Left cardiac atrium (tissue), 4 donors: ENCODE measurements at regions of chr7 and their contacts with region 1.

Region 1: GRCh38 chr7:35185907-35186731 is 67.8 kb downstream of the TBX20 start:
- DNase-seq: peak; percentile 77
- ATAC-seq: peak; percentile 91 to 94

Region 2: GRCh38 chr7:35253710-35254495 is 67.8 kb after region 1 on chr7 and contains the start of gene TBX20:
- intact Hi-C with region 1: loop called in 1 of 2 experiments (anchors 10 kb)
- DNase-seq: peak; percentile 89
- ATAC-seq: peak; percentile 83 to 84
- total RNA-seq, gene TBX20: 109 to 126 TPM

Region 3: DNA sequence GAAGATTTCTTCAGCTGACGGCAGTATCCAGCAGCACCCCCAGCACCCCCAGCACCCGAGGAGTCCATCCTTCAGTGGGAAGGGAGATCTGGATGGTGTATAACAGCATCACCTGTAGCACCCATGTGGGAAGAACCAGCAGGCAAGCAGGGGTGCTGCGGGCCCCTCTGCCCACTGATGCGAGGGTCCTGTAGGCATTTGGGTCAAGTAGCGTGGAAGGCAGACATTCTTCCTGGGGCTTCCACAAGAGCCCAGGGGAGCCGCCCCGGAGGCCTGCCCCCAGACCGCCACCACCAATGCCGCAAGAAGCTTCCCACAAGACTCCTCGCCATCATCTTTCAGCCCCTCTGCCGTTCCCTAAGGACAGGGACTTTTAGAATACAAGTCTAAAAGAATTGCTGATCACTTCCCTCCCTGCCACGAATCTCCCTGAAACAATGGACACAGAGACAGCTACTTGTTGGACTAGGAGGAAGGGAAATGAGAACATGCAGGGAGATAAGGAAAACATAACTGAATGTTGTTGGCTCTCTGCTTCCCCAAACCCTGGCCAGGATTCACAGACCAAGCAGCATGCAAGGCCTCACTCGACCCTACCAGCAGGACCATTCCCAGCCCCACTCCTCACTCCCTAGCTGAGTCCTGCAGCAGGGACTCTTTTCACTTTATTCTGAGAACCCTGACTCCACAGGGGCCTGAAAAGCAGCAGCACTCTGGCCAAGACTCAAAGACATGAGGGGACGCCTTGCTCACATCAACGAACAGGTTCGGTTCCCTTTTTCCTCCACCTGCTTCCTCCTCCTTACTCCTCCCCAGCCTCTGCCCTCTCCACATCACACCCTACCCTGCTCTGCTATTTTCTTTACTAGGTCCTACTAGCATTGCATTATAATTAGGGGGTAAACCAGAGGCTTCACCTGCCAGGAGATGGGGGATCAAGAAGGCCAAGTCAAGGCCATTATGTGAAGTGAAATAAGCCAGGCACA is 344.3 kb after region 1 on chr7:
- intact Hi-C with region 1: loop called in 1 of 2 experiments (anchors 5 kb)
- DNase-seq: no peak
- ATAC-seq: peak; percentile 37 to 49